SK-N-SH (cell line): ENCODE measurements at regions of chr4 and their contacts with region 1.

Region 1: DNA sequence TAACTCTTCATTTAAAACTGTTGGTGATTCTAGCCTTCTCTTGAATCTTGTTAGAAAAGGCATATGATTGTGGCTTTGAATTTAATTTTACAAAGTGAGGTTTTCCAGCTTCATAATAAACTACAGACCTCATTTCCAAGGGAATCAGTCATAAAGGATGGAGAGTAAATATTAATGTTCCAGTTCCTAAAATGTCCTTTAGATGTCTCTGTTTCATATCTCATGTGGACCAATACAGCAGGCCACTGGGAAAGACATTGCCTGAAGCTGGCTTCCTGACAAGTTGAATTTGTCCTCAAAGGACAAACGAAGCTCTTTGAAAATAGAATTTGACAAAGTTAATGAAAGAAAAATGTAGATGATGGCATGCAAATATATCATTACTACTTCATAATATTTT is 125.4 kb downstream of the ZNF330 start:
- DNase-seq: peak; percentile 66
- H3K4me3 ChIP-seq: no peak overlapping the region
- H3K27ac ChIP-seq: peak overlapping the region in 1 of 2 experiments; percentile 58; a peak in 2 of 4 replicates
- H3K4me1 ChIP-seq: peaks cover 11 to 16% of the 10 kb centered on the region in 2 experiments; a peak in 3 of 4 replicates
- H3K27me3 ChIP-seq: no peaks in the 10 kb centered on the region
- CTCF ChIP-seq: peak; percentile 77
- EP300 ChIP-seq: peak in 1 of 2 experiments; percentile 44; a peak in 1 of 4 replicates
- RAD21 ChIP-seq: peak; percentile 94

Region 2: GRCh38 chr4:141307241-141307689 is 38.9 kb before region 1 on chr4:
- CTCF ChIA-PET with region 1: interaction called, 18 read pairs
- POLR2A ChIA-PET with region 1: no interaction called
- DNase-seq: peak; percentile 63
- H3K4me3 ChIP-seq: no peak overlapping the region
- H3K27ac ChIP-seq: no peak overlapping the region
- H3K4me1 ChIP-seq: peaks cover 0 to 3% of the 10 kb centered on the region in 2 experiments; a peak in 1 of 4 replicates
- H3K27me3 ChIP-seq: no peaks in the 10 kb centered on the region
- CTCF ChIP-seq: peak; percentile 73
- EP300 ChIP-seq: no peak
- RAD21 ChIP-seq: peak; percentile 87

Region 3: DNA sequence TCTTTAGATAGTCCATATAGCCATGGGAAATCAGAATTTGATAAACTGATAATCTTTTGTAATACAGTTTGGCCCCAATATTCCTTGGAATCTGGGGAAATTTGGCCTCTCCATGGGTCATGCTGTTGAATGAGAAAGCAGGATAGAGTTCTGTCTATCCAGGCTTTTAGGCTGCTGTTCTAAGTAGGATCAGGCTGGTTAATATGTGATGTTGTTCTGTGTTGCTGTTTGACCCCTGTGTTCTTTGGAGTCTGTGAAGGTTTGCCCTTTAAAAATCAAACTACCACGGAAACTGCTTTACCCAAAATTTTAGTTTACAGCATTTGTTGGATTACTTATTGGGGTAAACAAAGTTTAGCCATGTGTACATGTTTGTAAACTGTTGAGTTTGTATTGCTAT is 11.0 kb before region 1 on chr4:
- CTCF ChIA-PET with region 1: interaction called, 15 read pairs
- POLR2A ChIA-PET with region 1: no interaction called
- DNase-seq: no peak
- H3K4me3 ChIP-seq: no peak overlapping the region
- H3K27ac ChIP-seq: no peak overlapping the region
- H3K4me1 ChIP-seq: no peaks in the 10 kb centered on the region
- H3K27me3 ChIP-seq: no peaks in the 10 kb centered on the region
- CTCF ChIP-seq: no peak
- EP300 ChIP-seq: no peak
- RAD21 ChIP-seq: no peak

Region 4: DNA sequence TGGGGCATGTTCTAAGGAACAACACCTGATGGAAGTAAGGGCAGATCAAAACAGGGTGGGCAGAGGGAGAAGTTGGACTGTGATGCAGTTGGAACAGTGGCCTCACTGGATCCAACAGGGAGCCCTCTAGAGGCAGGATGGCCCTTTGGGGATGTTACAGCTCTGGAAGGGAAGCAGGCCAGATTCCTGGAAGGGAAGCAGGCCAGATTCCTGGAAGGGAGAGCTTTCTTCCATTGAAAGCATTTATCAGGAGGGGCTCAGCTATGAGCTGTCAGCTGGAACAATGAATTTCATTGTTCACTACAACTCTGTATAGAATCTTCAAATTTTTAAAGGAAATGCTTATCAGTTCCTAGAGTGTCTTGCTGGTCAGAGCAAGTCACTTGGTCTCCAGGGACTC is 308.0 kb after region 1 on chr4:
- CTCF ChIA-PET with region 1: interaction called, 23 read pairs
- POLR2A ChIA-PET with region 1: no interaction called
- DNase-seq: no peak
- H3K4me3 ChIP-seq: no peak overlapping the region
- H3K27ac ChIP-seq: no peak overlapping the region
- H3K4me1 ChIP-seq: peaks cover 0 to 2% of the 10 kb centered on the region in 2 experiments; a peak in 3 of 4 replicates
- H3K27me3 ChIP-seq: no peaks in the 10 kb centered on the region
- CTCF ChIP-seq: peak; percentile 54
- EP300 ChIP-seq: no peak
- RAD21 ChIP-seq: peak; percentile 51

Region 5: DNA sequence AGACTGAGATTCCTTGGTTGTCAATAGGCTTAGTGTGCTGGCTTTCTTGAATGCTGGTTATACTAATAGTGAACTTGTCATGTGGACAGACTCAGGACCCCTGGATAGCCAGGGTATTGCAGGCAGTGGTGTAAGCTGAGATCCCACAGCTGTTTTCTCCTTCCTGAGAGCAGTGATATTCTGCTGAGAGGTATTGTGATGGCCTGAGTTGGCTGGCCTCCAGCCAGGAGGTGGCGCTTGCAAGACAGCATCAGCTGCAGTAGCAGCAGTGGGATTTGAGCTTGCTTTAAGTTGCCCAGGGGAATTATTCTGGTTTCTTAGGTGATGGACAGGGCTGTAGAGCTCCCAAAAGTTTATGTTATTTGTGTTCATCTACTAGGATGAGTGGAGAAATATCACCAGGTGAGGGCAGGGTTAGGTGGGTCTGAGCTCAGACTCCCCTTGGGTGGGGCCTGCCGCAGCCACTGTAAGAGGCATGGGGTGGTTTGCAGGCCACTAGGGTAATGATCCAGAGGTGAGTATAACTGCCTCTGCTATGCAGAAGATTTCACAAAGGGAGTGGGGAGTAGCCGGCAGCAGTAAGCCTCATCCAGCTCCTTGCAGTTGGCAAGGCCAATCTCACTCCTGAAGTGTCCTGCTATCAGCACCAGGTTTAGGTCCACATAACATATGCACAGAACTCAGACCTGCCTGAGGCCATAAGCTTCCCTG is 356.5 kb after region 1 on chr4:
- CTCF ChIA-PET with region 1: interaction called, 11 read pairs
- POLR2A ChIA-PET with region 1: no interaction called
- DNase-seq: no peak
- H3K4me3 ChIP-seq: no peak overlapping the region
- H3K27ac ChIP-seq: no peak overlapping the region
- H3K4me1 ChIP-seq: no peaks in the 10 kb centered on the region; a peak in 1 of 4 replicates
- H3K27me3 ChIP-seq: no peaks in the 10 kb centered on the region
- CTCF ChIP-seq: peak; percentile 12; the same call in 1 of the 2 replicates
- EP300 ChIP-seq: no peak
- RAD21 ChIP-seq: no peak

Region 6: DNA sequence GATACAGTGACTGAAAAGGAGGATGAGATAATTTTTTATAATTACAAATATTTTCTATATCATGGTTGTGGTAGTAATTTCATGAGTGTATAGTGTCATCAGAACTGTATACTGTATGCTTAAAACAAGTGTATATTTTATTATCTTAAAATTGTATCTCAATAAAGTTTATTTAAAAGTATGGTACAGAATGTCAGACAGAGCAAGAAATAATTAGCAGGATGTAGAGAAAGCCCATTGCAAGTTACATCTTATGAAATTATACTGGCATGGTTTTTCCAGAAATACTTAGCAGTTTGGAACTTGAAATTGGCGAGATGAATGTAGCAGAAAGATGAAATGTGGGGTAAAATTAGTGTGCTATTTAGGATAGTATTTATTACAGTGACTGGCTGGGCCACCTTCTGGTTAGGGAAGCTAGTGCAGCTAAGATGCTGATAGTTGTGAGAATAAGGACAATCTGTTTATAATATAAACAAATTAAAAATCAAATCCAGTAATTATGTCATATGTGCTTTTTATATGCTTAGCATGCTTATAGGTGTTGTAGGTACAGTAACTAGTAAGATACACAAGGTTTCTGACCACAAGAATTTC is 365.0 kb after region 1 on chr4:
- CTCF ChIA-PET with region 1: interaction called, 10 read pairs
- POLR2A ChIA-PET with region 1: no interaction called
- DNase-seq: no peak
- H3K4me3 ChIP-seq: no peak overlapping the region
- H3K27ac ChIP-seq: no peak overlapping the region
- H3K4me1 ChIP-seq: peaks cover 0 to 10% of the 10 kb centered on the region in 2 experiments; a peak in 2 of 4 replicates
- H3K27me3 ChIP-seq: no peaks in the 10 kb centered on the region
- CTCF ChIP-seq: peak; percentile 68
- EP300 ChIP-seq: no peak
- RAD21 ChIP-seq: peak; percentile 66